Psoas muscle (tissue), 8 donors: ENCODE measurements at regions of chr4 and their contacts with region 1.

Region 1: DNA sequence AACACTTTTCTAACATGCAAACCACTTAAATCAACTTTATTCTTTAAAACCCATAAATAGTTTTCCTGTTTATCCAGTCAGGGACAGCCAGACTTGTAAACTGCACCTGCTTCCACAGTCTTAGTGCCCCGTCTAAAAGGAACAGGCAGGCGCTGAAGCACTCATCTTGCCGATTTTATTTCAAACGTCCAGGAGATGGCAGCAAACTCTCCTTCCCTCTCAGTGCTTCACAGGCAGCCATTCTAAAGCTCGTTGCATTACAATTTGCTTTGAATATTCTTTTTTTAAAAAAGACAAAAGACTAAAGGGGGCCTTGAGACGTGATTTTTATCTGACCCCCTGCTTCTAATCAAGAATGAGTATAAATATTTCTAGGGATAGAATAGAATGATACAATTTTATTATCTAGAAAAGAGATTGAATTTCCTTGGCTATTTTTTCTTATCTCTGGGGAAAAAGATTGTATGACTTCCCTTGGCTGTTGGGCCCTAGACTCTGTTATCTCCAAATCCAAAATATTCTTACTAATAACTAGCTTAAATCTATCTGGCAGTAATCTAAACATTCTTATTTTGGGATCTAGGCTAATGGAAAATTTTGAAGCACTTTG is 93.6 kb upstream of the MYOZ2 start:
- DNase-seq: no peak
- ATAC-seq: peak; percentile 61 to 68 (median 64)
- H3K4me3 ChIP-seq: peak overlapping the region; percentile 40
- H3K27ac ChIP-seq: peak overlapping the region; percentile 98
- H3K4me1 ChIP-seq: peaks cover 66% of the 10 kb centered on the region
- H3K27me3 ChIP-seq: no peaks in the 10 kb centered on the region
- CTCF ChIP-seq: peak; percentile 72

Region 2: DNA sequence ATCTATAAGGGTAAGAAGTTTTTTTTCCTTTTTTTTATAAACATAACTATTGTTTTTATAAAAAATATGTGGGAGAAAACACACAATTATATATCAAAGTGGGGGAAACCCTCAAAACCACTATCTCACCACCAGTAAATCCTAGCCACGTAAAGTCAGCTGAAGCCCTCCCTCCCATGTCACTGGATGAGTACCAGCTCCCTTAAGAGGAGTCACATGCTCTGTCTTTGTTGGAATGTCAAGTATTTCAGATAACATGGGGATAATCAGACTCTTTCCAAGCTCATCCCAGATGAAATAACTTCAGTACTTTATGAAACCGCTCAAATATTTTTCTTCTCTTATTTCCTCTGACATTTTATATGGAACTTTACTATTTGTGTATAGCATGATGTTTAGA is 96.0 kb after region 1 on chr4:
- intact Hi-C with region 1: loop called (anchors 2 to 10 kb)
- DNase-seq: no peak
- ATAC-seq: no peak
- H3K4me3 ChIP-seq: peak overlapping the region; percentile 50
- H3K27ac ChIP-seq: peak overlapping the region; percentile 72
- H3K4me1 ChIP-seq: peaks cover 31% of the 10 kb centered on the region
- H3K27me3 ChIP-seq: no peaks in the 10 kb centered on the region
- CTCF ChIP-seq: no peak

Region 3: GRCh38 chr4:119212234-119212963 is 170.3 kb after region 1 on chr4 and contains the start of gene USP53:
- intact Hi-C with region 1: loop called (anchors 2 kb)
- DNase-seq: peak; percentile 96 to 98
- ATAC-seq: peak; percentile 93 to 96 (median 96)
- H3K4me3 ChIP-seq: peak within 1 kb of the TSS; percentile 91
- H3K27ac ChIP-seq: peak within 1 kb of the TSS; percentile 99
- H3K4me1 ChIP-seq: peaks cover 23% of the 10 kb centered on the region
- H3K27me3 ChIP-seq: no peaks in the 10 kb centered on the region
- CTCF ChIP-seq: no peak
- total RNA-seq, gene USP53: 43.8 to 89.5 (median 57.3) TPM